G401 (cell line): ENCODE measurements at regions of chr12 and their contacts with region 1.

Region 1: GRCh38 chr12:7108796-7109571 is at the start of gene C1RL:
- DNase-seq: peak; percentile 74
- total RNA-seq, gene C1RL: 3.9 and 5.4 TPM in 2 replicates

Region 2: DNA sequence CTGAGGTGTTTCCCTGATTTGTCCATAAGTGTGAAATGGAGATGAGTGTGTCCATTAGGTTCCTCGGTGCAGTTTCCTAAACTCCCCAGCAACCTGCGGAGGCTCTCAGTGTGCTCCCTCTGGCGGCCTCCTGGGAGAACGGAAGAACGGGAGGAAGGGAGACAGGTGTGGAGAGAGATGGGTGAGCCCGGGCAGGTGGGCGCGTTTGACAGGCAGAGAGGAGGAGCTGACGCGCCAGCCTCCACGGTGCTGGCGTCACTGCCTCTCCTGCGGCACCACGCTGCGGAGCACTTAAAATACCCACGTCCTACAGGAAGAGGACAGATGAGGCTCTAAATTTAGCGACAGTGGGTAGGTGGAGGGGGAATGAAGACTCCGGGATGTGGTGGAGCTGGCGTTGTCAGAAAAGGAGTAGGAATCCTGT is 53.7 kb after region 1 on chr12:
- in situ Hi-C with region 1: loop called (anchors 10 kb)
- DNase-seq: peak; percentile 64

Region 3: GRCh38 chr12:7180685-7181084 is 71.7 kb after region 1 on chr12:
- in situ Hi-C with region 1: no loop called
- DNase-seq: no peak